ENCODE measurements at regions of chr2 and their contacts with region 1.

Region 1: GRCh38 chr2:231052494-231053451 is 3.9 kb upstream of the PSMD1 start:
- DNase-seq: no peak
- H3K4me3 ChIP-seq: peak overlapping the region; percentile 57
- H3K27me3 ChIP-seq: peaks cover 4% of the 10 kb centered on the region
- CTCF ChIP-seq: peak; percentile 96

Region 2: DNA sequence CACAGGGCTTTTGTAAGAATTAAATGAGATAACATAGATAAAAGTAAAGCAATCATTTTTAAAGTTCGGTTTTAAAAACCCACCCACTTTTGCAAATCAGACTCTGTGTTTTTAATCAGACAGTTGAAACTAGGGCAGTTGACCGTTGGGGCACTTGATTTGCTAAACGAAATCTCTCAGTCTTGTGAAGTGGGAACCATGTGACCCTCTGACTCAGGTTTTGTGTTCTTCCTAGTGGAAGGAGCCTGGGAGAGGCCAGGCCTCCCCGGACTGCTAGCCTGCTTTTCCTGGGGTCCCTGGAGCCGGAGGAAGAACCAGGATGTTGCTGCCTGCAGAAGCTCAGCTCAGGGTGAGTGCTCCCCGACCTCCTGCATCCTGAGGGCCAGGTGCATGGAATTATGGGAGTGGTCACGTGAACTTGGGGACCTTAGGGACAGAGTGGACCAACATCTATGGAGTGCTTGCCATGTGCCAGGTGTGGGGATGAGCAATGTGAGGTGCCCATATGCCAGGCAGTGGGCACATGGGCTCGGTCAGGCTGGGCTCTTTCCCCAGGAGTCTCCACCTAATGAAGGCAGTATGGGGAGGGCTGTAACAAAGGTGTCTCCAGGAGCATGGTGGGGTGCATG is 11.6 kb before region 1 on chr2:
- CTCF ChIA-PET with region 1: interaction called, 13 read pairs
- POLR2A ChIA-PET with region 1: no interaction called
- DNase-seq: no peak
- H3K4me3 ChIP-seq: no peak overlapping the region
- H3K27me3 ChIP-seq: peaks cover 29% of the 10 kb centered on the region
- CTCF ChIP-seq: no peak

Region 3: DNA sequence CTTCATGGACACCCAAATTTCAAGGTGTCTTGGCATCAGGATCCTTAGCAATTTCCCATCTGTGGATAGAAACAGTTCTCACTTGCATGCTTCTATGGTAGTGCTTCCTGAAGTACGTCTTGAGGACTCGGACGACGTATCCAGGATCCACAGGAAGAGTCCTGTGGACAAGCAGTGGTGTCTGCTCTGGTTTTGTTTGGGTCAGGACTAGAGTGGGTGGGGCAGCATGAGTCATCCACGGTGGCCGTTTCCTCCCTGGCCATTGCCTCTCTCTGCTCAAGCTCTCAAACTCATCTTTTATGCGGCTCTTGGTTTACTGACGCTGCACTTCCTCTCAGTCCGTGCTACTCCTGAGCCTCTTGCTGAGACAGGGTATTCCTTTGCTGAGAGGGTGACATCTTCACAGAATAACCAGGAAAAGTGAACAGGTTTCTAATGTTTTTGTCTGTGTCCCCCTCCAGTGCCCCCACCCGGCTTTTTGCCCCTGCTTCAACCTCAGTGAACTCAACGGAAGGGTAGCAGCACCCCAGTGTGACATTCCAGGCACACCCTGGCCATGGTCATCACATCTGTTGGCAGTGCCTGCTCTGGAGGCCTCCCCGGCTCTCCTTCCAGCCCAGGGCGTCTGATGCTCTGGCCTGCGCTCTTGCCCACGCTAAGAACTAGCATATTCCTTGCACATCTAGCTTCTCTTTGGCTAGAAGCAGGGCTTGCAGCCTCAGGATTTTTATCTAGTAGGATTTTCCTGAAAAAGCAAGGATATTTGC is 207.9 kb after region 1 on chr2:
- CTCF ChIA-PET with region 1: no interaction called
- POLR2A ChIA-PET with region 1: no interaction called
- DNase-seq: no peak
- H3K4me3 ChIP-seq: no peak overlapping the region
- H3K27me3 ChIP-seq: no peaks in the 10 kb centered on the region
- CTCF ChIP-seq: no peak